ENCODE measurements at regions of chr15 and their contacts with region 1.

Region 1: DNA sequence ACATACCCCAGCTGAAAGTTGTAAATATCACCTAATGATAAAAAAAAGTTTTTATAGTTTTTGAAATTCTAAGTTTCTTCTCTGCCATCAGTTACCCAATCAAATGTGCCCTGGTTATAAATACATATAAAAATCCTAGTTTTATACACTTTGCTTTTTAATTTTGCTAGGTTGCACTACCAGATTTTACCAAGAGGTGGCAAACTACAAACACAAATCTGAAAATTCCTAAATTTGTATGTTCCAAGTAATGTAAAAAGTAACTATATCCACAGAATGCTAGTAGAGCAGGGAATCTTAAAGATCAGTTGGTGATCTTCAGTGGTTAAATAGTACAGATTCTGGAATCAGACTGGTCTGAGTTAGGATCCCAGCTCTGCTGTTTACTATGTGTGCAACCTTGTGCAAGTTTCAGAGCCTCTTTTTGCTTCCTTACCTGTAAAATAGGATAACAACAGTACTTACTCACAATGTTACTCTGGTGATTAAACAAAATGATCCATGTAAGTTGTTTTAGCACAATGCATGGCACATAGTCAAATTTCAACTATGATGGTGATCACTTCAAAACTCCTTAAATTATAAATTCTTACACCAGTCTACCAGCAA is 11.0 kb downstream of the TRPM7 start:
- DNase-seq: peak in 2 of 5 donors; percentile 50 to 52
- H3K4me3 ChIP-seq: no peak overlapping the region
- H3K27ac ChIP-seq: no peak overlapping the region
- H3K4me1 ChIP-seq: peaks cover 0 to 5% (median 5%) of the 10 kb centered on the region in 3 donors
- H3K27me3 ChIP-seq: no peaks in the 10 kb centered on the region
- CTCF ChIP-seq: peak; percentile 69

Region 2: DNA sequence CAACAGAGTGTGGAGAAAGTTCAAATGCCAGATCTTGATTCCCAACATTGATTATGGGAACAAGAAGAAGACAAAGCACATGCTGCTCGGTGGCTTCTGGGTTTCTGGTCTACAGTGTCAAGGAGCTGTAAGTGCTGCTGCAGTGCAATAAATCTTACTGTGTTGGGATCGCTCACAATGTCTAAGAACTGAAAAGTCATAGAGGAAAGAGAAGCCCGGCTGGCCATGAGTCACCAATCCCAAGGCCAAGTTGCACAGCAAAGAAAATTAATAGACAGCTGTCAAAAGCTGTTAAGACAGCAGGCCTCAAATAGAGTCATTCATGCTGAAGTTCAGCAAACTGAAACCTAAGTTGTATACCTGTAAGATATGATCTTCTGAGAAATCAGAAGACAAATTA is 123.0 kb after region 1 on chr15:
- intact Hi-C with region 1: no loop called
- DNase-seq: peak in 1 of 5 donors; percentile 16
- H3K4me3 ChIP-seq: no peak overlapping the region
- H3K27ac ChIP-seq: peak overlapping the region in 1 of 2 donors; percentile 5
- H3K4me1 ChIP-seq: no peaks in the 10 kb centered on the region
- H3K27me3 ChIP-seq: no peaks in the 10 kb centered on the region
- CTCF ChIP-seq: no peak

Region 3: GRCh38 chr15:50890771-50891558 is 215.3 kb after region 1 on chr15:
- intact Hi-C with region 1: loop called (anchors 10 kb)
- DNase-seq: no peak
- H3K4me3 ChIP-seq: no peak overlapping the region
- H3K27ac ChIP-seq: no peak overlapping the region
- H3K4me1 ChIP-seq: no peaks in the 10 kb centered on the region
- H3K27me3 ChIP-seq: no peaks in the 10 kb centered on the region
- CTCF ChIP-seq: no peak

Measured in kidney (tissue), 22 donors.